Heart left ventricle (tissue), 16 donors: ENCODE measurements at regions of chr7 and their contacts with region 1.

Region 1: GRCh38 chr7:83947260-83947659 is 247.3 kb downstream of the SEMA3A start:
- DNase-seq: no peak
- ATAC-seq: no peak
- H3K4me3 ChIP-seq: no peak overlapping the region
- H3K27ac ChIP-seq: no peak overlapping the region
- H3K4me1 ChIP-seq: no peaks in the 10 kb centered on the region
- H3K27me3 ChIP-seq: no peaks in the 10 kb centered on the region
- CTCF ChIP-seq: peak in 5 of 12 donors; percentile 16 to 29 (median 19)
- POLR2A ChIP-seq: no peak

Region 2: GRCh38 chr7:83824214-83824613 is 123.0 kb before region 1 on chr7:
- intact Hi-C with region 1: no loop called
- DNase-seq: no peak
- ATAC-seq: no peak
- H3K4me3 ChIP-seq: no peak overlapping the region
- H3K27ac ChIP-seq: no peak overlapping the region
- H3K4me1 ChIP-seq: no peaks in the 10 kb centered on the region
- H3K27me3 ChIP-seq: no peaks in the 10 kb centered on the region
- CTCF ChIP-seq: no peak
- POLR2A ChIP-seq: no peak

Region 3: DNA sequence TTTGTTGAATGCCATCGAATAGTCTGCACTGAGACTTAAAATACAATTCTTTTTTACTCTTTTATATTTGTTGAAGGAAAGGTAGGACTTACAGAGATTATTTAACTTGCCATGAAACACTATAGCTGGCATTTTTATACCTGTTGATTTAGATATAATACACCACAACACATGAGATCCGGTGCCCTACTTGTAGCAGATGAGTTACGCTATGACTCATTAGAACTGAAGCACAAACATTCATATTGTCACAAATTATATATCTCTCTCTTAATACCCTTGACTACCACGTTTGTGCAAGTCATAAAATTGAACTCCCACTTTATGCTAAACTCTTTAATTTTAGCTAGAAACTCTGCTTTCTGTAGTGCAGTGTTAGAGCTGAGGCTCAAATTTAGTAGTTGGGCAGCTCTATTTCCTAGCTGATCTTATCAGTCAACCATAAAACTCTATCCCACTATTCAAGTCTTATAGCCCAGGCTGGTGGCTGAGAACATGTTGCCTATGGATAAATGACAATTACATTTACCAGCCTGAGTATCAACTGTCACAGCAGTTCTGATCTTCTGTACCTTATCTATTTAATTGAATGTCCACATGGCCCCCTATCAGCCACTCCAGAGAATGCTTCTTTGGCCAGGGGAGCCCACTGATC is 1377.0 kb after region 1 on chr7:
- intact Hi-C with region 1: loop called in 1 of 10 experiments (anchors 10 kb)
- DNase-seq: no peak
- ATAC-seq: no peak
- H3K4me3 ChIP-seq: no peak overlapping the region
- H3K27ac ChIP-seq: no peak overlapping the region
- H3K4me1 ChIP-seq: no peaks in the 10 kb centered on the region
- H3K27me3 ChIP-seq: no peaks in the 10 kb centered on the region
- CTCF ChIP-seq: no peak
- POLR2A ChIP-seq: no peak